ENCODE measurements at regions of chr3 and their contacts with region 1.

Region 1: GRCh38 chr3:15205934-15206661 is at the start of gene CAPN7:
- DNase-seq: peak; percentile 98
- H3K4me3 ChIP-seq: peak within 1 kb of the TSS; percentile 87 to 92
- H3K27ac ChIP-seq: peak within 1 kb of the TSS; percentile 83 to 92
- H3K4me1 ChIP-seq: peaks cover 0 to 13% of the 10 kb centered on the region in 2 experiments; a peak in 3 of 4 replicates
- H3K27me3 ChIP-seq: no peaks in the 10 kb centered on the region
- CTCF ChIP-seq: peak; percentile 53
- EP300 ChIP-seq: no peak
- RAD21 ChIP-seq: no peak
- polyA plus RNA-seq, gene CAPN7: 7.3 and 11.1 TPM in 2 replicates

Region 2: DNA sequence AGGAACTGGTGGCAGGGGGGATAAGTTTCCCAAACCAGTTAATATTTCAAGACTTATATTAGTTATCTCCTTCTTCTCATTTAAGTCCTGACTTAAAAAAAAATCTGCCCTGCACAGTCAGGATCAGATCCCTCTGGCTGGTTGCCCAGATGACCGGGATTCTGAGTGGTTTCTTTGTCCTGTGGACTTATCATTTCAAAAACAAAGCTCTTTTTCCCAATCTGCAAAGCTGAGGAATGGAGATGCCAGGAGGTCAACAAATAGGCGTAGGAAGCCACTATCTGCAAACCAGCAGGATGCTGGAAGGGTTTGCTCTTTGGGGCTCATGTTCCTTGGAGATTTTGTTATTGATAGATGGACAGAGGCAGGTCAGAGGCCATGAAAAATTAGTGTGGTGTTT is 525.4 kb before region 1 on chr3:
- CTCF ChIA-PET with region 1: no interaction called
- POLR2A ChIA-PET with region 1: no interaction called
- DNase-seq: no peak
- H3K4me3 ChIP-seq: no peak overlapping the region
- H3K27ac ChIP-seq: no peak overlapping the region
- H3K4me1 ChIP-seq: peaks cover 0 to 14% of the 10 kb centered on the region in 2 experiments; a peak in 2 of 4 replicates
- H3K27me3 ChIP-seq: no peaks in the 10 kb centered on the region
- CTCF ChIP-seq: no peak
- EP300 ChIP-seq: no peak
- RAD21 ChIP-seq: no peak

Region 3: DNA sequence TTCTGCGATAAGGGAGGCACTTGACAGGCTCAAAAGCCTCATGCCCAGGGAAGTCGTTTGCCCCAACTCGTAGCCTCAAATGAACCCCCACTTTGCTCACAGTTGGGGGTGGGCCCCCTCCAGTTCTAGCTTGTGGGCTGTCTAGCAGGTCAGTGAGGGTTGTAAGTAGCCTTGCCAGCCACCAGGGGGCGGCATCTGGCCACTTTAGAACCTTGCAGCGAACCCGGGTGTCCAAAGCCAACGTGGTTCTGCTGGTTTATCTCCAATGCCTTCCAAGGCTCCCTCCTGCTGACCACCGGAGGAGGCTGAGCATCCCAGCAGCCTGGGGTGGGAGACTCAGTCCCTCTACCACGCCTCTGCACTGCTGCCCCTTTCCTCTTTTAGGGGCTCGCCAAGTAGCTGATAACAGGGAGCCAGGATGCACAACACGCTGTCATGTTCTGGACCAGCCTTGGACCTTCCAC is 98.0 kb before region 1 on chr3:
- CTCF ChIA-PET with region 1: interaction called, 42 read pairs
- POLR2A ChIA-PET with region 1: no interaction called
- DNase-seq: peak; percentile 86
- H3K4me3 ChIP-seq: no peak overlapping the region
- H3K27ac ChIP-seq: no peak overlapping the region
- H3K4me1 ChIP-seq: peaks cover 0 to 2% of the 10 kb centered on the region in 2 experiments; a peak in 1 of 4 replicates
- H3K27me3 ChIP-seq: no peaks in the 10 kb centered on the region; the same call in 1 of the 2 replicates
- CTCF ChIP-seq: peak; percentile 84
- EP300 ChIP-seq: no peak
- RAD21 ChIP-seq: peak; percentile 82

Region 4: DNA sequence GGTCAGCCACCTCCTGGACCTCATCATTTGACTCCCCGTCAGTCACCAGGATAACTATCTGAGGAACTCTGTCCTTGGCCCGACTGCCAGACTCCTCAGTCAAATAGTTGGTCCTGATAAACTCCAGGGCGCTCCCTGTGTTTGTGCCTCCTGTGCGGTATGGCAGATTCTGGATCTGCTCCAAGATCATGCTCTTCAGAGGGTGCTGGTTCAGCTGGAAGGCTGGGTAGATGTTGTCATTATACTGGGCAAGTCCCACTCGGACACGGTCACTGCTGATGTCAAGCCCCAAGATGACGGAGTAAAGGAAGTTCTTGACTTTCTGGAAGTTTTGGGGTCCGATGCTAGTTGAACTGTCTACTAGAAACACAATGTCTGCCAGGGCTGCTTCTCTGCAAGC is 31.1 kb before region 1 on chr3:
- CTCF ChIA-PET with region 1: interaction called, 20 read pairs
- POLR2A ChIA-PET with region 1: no interaction called
- DNase-seq: no peak
- H3K4me3 ChIP-seq: no peak overlapping the region
- H3K27ac ChIP-seq: no peak overlapping the region
- H3K4me1 ChIP-seq: no peaks in the 10 kb centered on the region; a peak in 1 of 4 replicates
- H3K27me3 ChIP-seq: peaks cover 6% of the 10 kb centered on the region; the same call in 1 of the 2 replicates
- CTCF ChIP-seq: no peak
- EP300 ChIP-seq: no peak
- RAD21 ChIP-seq: no peak

Region 5: DNA sequence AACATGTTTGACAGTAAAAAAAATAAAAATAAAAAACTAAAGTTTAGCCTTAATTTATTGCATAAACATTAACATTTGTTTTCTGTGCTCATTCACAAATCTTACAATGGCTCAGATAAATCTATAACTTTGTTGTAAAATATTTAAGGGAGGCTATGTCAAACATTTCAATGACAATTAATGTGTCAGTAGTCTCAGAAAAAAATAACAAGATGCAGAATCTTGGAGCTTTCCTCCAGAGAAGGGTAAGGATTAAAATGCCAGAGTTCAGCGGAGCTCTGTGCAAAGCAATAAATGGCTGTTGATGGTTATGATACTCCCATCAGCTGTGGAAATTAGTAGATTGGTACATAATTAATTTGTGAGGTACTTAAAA is 20.0 kb before region 1 on chr3:
- CTCF ChIA-PET with region 1: interaction called, 20 read pairs
- POLR2A ChIA-PET with region 1: no interaction called
- DNase-seq: no peak
- H3K4me3 ChIP-seq: no peak overlapping the region
- H3K27ac ChIP-seq: no peak overlapping the region
- H3K4me1 ChIP-seq: no peaks in the 10 kb centered on the region
- H3K27me3 ChIP-seq: no peaks in the 10 kb centered on the region; the same call in 1 of the 2 replicates
- CTCF ChIP-seq: no peak
- EP300 ChIP-seq: no peak
- RAD21 ChIP-seq: no peak

Region 6: DNA sequence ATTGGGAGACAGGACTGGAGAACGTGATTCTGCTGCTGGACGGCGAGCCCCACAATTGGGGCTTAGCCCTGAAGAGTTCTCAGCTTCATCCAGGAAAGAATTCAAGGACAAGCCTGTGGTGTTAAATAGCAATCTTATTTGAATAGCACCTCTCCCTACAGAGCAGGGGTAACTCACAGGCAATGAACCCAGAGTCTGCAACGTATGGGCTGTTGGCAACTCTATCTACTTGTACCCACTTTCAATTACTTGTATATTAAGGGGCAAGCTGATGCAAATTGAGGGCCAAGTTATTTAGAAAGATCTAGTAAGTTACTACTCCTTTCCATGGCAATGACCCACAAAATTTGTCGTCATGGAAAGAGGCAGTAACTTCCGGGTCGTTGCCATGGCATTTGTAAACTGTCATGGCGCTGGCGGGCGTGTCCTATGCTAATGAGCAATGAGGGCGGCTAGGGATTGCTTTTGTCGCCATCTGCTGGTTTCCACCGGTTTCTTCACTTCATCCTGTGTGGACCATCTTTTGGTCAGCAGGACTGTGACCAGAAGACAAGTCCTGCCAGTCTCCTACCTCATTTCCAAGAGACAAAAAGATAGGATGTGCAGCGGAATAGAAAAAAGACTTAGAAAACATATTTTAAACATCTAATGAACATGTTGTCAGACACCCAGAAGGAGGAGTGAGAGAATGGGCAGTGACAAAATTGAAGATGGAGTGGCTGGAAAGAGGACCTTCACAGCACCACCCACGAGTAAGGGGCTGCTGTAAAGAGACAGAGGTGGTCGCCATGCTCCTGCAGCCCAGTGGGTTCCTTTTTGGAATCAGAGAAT is 172.1 kb after region 1 on chr3:
- CTCF ChIA-PET with region 1: interaction called, 10 read pairs
- POLR2A ChIA-PET with region 1: no interaction called
- DNase-seq: peak; percentile 79
- H3K4me3 ChIP-seq: no peak overlapping the region
- H3K27ac ChIP-seq: peak overlapping the region in 1 of 2 experiments; percentile 62; a peak in 2 of 4 replicates
- H3K4me1 ChIP-seq: peaks cover 0 to 2% of the 10 kb centered on the region in 2 experiments; a peak in 1 of 4 replicates
- H3K27me3 ChIP-seq: no peaks in the 10 kb centered on the region
- CTCF ChIP-seq: peak; percentile 88
- EP300 ChIP-seq: no peak
- RAD21 ChIP-seq: peak; percentile 88

Region 7: DNA sequence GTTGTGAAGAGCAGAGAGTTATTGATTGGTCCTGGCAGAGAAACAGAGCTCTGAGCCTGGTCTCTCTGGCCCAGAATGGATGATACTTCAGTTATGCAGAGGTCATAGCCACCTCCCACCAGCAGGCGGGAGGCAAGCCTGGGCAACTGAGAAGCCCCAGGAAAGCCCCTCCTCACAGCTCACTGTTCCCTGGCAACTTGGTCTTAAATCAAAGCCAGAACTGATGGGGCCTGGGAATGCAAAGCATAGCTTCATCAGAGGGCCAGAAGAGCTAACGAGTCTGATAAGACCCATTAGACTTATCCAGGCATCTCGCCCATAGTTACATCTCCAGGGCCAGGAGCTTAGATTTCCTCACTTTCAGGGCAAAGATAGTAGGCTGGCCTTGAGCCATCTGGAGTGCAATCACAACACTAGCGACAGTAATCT is 320.9 kb after region 1 on chr3:
- CTCF ChIA-PET with region 1: interaction called, 11 read pairs
- POLR2A ChIA-PET with region 1: no interaction called
- DNase-seq: peak; percentile 84
- H3K4me3 ChIP-seq: no peak overlapping the region; a peak in 1 of 4 replicates
- H3K27ac ChIP-seq: peak overlapping the region in 1 of 2 experiments; percentile 87; a peak in 2 of 4 replicates
- H3K4me1 ChIP-seq: peaks cover 5 to 24% of the 10 kb centered on the region in 2 experiments; a peak in 3 of 4 replicates
- H3K27me3 ChIP-seq: no peaks in the 10 kb centered on the region
- CTCF ChIP-seq: peak; percentile 39
- EP300 ChIP-seq: peak in 1 of 2 experiments; percentile 97; a peak in 2 of 4 replicates
- RAD21 ChIP-seq: peak; percentile 81

Measured in SK-N-SH (cell line).